ENCODE measurements at regions of chr10 and their contacts with region 1.

Region 1: GRCh38 chr10:101569838-101570766 is 18.0 kb downstream of the POLL start:
- DNase-seq: peak; percentile 85 to 89 (median 87)
- ATAC-seq: peak; percentile 95
- H3K4me3 ChIP-seq: peak overlapping the region; percentile 7
- H3K4me1 ChIP-seq: peaks cover 7% of the 10 kb centered on the region
- CTCF ChIP-seq: peak; percentile 92

Region 2: DNA sequence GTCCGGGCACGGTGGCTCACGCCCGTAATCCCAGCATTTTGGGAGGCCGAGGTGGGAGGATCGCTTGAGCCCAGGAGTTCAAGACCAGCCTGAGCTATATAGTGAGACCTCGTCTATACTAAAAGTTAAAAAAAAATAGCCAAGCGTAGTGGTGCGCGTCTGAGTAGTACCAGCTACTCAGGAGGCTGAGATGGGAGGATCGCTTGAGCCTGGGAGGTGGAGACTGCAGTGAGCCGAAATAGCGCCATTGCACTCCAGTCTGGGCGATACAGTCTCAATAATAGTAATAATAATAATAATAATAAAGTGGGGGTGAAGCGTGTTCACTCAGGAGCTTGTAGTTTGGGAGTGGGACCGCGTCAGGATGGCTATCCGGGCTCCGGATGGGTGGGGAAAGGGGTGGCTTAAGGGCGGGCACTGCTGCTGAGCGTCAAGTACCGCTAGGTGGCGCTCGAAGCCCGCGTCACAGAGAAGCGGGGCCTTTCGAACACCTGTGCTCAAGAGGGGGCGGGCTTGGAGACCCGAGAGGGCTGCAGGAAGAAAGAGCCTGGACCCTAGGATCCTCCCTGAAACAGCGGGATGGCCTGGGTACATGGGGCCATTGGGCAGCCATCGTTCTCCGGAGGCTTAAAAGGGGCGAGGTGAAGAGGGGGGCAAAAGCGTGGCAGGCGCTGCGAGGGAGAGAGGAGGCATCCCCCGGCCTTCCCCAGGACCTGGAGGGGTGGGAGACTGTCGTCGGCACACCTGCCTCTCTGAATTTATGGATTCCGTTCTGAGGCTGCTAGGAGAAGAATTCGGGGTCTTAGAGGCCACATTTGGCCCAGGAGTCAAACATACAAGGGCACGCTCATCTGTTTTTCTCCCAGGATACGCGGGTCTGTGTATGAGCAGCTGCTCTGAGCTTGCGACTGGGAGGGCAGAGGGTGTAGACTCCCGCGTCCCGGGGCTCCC is 355.4 kb before region 1 on chr10:
- intact Hi-C with region 1: loop called in 1 of 2 experiments (anchors 5 kb)
- DNase-seq: peak in 2 of 3 donors; percentile 72 to 74
- ATAC-seq: peak; percentile 74
- H3K4me3 ChIP-seq: no peak overlapping the region
- H3K4me1 ChIP-seq: peaks cover 17% of the 10 kb centered on the region
- CTCF ChIP-seq: peak; percentile 73

Region 3: GRCh38 chr10:101272229-101272868 is 297.8 kb before region 1 on chr10:
- intact Hi-C with region 1: loop called in 1 of 2 experiments (anchors 10 kb)
- DNase-seq: peak in 2 of 3 donors; percentile 68 to 72
- ATAC-seq: peak; percentile 83
- H3K4me3 ChIP-seq: no peak overlapping the region
- H3K4me1 ChIP-seq: no peaks in the 10 kb centered on the region
- CTCF ChIP-seq: peak; percentile 66

Region 4: GRCh38 chr10:101353692-101354327 is 216.3 kb before region 1 on chr10 and contains the start of gene BTRC:
- intact Hi-C with region 1: no loop called
- DNase-seq: peak; percentile 95 to 97 (median 97)
- ATAC-seq: peak; percentile 99
- H3K4me3 ChIP-seq: peak within 1 kb of the TSS; percentile 84
- H3K4me1 ChIP-seq: no peaks in the 10 kb centered on the region
- CTCF ChIP-seq: no peak
- total RNA-seq, gene BTRC: 12.4 to 19.5 (median 16.0) TPM

Region 5: DNA sequence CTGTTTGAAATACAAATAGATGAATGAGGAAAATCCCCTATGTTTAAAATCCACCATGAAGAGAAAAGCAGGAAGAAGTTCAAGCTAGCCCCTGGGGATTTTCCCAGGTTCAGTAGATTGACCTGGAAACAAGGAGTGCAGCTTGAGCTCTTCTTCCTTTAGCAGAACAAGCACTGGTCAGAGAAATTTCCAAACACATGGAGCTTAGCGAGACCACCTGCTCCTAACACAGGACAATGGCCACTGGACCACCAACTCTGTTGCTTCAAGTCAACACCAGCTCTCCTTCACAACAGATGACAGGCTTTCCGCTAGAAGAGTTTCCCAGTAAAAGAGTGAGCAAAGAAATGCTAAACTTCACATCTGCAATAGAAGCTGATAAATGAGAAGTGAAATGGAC is 134.2 kb after region 1 on chr10:
- intact Hi-C with region 1: no loop called
- DNase-seq: no peak
- ATAC-seq: no peak
- H3K4me3 ChIP-seq: no peak overlapping the region
- H3K4me1 ChIP-seq: no peaks in the 10 kb centered on the region
- CTCF ChIP-seq: no peak